ENCODE measurements at regions of chr12 and their contacts with region 1.

Region 1: DNA sequence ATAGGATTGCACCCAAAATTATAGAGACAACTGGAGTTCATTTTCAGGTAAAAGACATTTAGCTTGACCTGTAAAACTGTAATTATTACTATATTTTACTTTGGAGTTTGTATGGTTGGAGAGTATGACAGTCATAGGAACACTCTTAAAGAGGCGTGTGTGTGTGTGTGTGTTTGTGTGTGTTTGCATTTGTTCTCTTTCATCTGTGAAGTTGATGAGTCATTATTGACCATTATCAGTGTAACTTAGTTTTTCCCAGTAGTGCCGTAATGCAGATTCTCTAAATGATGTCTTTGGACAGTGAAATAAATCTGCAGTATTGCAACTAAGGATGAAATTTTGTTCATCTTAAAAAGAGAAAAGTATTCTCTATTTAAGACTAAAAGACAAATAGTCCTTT is 13.0 kb downstream of the WASHC4 start:
- H3K4me3 Mint-ChIP-seq: no peak overlapping the region
- H3K27ac Mint-ChIP-seq: no peak overlapping the region
- H3K4me1 Mint-ChIP-seq: no peaks in the 10 kb centered on the region
- H3K27me3 Mint-ChIP-seq: no peaks in the 10 kb centered on the region

Region 2: GRCh38 chr12:103947871-103948555 is 1172.5 kb before region 1 on chr12:
- intact Hi-C with region 1: loop called (anchors 5 kb)
- H3K4me3 Mint-ChIP-seq: no peak overlapping the region
- H3K27ac Mint-ChIP-seq: peak overlapping the region; percentile 37
- H3K4me1 Mint-ChIP-seq: peaks cover 12% of the 10 kb centered on the region
- H3K27me3 Mint-ChIP-seq: no peaks in the 10 kb centered on the region

Region 3: GRCh38 chr12:104334581-104334980 is 786.0 kb before region 1 on chr12:
- intact Hi-C with region 1: loop called (anchors 5 kb)
- H3K4me3 Mint-ChIP-seq: no peak overlapping the region
- H3K27ac Mint-ChIP-seq: no peak overlapping the region
- H3K4me1 Mint-ChIP-seq: no peaks in the 10 kb centered on the region
- H3K27me3 Mint-ChIP-seq: no peaks in the 10 kb centered on the region

Region 4: GRCh38 chr12:104930388-104931326 is 189.9 kb before region 1 on chr12:
- intact Hi-C with region 1: no loop called
- H3K4me3 Mint-ChIP-seq: no peak overlapping the region
- H3K27ac Mint-ChIP-seq: no peak overlapping the region
- H3K4me1 Mint-ChIP-seq: peaks cover 26% of the 10 kb centered on the region
- H3K27me3 Mint-ChIP-seq: no peaks in the 10 kb centered on the region

Region 5: DNA sequence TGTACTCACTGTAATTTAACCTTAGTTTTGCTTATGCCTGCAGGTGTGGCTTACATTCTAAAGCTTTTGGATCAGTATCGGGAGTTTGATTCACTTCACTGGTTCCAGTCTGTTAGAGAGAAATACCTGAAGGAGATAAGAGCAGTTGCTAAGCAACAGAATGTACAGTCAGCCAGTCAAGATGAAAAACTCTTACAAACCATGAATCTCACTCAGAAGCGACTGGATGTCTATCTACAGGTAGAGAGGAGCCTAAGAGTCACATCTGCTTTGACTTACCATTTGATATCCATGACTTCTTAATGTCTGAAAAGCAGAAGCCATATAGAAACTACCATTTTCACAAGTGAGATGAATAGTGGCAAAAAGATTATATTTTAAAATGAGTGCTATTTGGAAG is 43.5 kb after region 1 on chr12:
- intact Hi-C with region 1: loop called (anchors 5 kb)
- H3K4me3 Mint-ChIP-seq: no peak overlapping the region
- H3K27ac Mint-ChIP-seq: no peak overlapping the region
- H3K4me1 Mint-ChIP-seq: no peaks in the 10 kb centered on the region
- H3K27me3 Mint-ChIP-seq: no peaks in the 10 kb centered on the region